Breast epithelium (tissue), 4 donors: ENCODE measurements at regions of chr15 and their contacts with region 1.

Region 1: GRCh38 chr15:59867086-59867855 is 136.8 kb upstream of the FOXB1 start:
- DNase-seq: no peak
- H3K4me3 ChIP-seq: no peak overlapping the region
- H3K27ac ChIP-seq: no peak overlapping the region
- H3K4me1 ChIP-seq: no peaks in the 10 kb centered on the region
- H3K27me3 ChIP-seq: peaks cover 0 to under 1% of the 10 kb centered on the region in 2 donors
- CTCF ChIP-seq: no peak
- POLR2A ChIP-seq: no peak

Region 2: GRCh38 chr15:59847968-59848367 is 19.3 kb before region 1 on chr15:
- intact Hi-C with region 1: no loop called
- DNase-seq: no peak
- H3K4me3 ChIP-seq: no peak overlapping the region
- H3K27ac ChIP-seq: no peak overlapping the region
- H3K4me1 ChIP-seq: no peaks in the 10 kb centered on the region
- H3K27me3 ChIP-seq: peaks cover 0 to 10% of the 10 kb centered on the region in 2 donors
- CTCF ChIP-seq: no peak
- POLR2A ChIP-seq: no peak

Region 3: GRCh38 chr15:61374848-61375247 is 1507.6 kb after region 1 on chr15:
- intact Hi-C with region 1: loop called (anchors 5 kb)
- DNase-seq: no peak
- H3K4me3 ChIP-seq: no peak overlapping the region
- H3K27ac ChIP-seq: no peak overlapping the region
- H3K4me1 ChIP-seq: no peaks in the 10 kb centered on the region
- H3K27me3 ChIP-seq: no peaks in the 10 kb centered on the region
- CTCF ChIP-seq: no peak
- POLR2A ChIP-seq: no peak